ENCODE measurements at regions of chr1 and their contacts with region 1.

Region 1: DNA sequence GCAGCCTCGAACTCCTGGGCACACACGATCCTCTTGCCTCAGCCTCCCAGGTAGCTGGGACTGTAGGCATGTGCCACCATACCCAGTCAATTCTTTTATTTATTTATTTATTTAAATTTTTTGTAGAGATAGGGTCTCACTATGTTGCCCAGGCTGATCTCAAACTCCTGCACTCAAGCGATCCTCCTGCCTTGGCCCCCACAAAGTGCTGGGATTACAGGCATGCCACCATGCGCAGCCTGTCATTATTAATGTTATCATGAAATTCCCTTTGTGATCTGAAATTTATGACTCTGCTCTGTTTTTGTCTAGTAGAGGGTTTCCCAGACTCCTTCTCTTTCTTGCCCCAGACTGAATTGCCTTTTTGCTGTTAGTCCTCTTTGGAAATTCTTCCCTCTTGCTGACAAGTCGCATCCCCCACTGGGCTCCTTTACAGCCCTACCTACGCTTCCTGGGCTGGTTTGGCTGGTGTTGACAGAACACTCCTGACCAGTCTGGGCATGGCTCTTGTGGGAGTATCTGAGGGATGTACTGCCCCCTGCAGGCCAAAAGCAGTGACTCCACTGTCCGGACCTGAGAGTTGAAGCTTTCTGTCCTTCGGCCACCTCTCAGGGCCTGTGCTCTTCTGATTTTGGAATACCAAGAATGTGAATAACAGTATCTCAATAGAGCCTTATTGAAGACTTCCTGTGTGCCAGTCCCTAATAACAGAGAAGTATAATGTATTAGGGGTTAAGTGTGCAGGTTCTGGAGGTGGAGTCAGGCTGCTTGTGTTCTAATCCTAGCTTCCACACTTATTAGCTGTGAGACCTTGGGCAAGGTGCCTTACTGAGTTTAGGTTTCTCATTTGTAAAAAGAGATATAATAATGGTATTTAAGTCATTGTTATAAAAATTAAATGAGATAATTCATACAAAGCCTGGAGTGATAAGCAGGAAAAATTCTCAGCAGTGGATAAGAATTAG is 28.2 kb downstream of the TCEANC2 start:
- DNase-seq: peak; percentile 74
- ATAC-seq: peak; percentile 94
- H3K4me3 Mint-ChIP-seq: no peak overlapping the region
- H3K27ac Mint-ChIP-seq: no peak overlapping the region
- H3K4me1 Mint-ChIP-seq: peaks cover 8% of the 10 kb centered on the region
- H3K27me3 Mint-ChIP-seq: no peaks in the 10 kb centered on the region

Region 2: GRCh38 chr1:54070171-54070837 is 11.3 kb before region 1 on chr1:
- CTCF ChIA-PET with region 1: interaction called, 38 read pairs
- POLR2A ChIA-PET with region 1: no interaction called
- DNase-seq: no peak
- ATAC-seq: peak; percentile 81
- H3K4me3 Mint-ChIP-seq: no peak overlapping the region
- H3K27ac Mint-ChIP-seq: no peak overlapping the region
- H3K4me1 Mint-ChIP-seq: no peaks in the 10 kb centered on the region
- H3K27me3 Mint-ChIP-seq: no peaks in the 10 kb centered on the region